Activated CD4-positive, alpha-beta memory T cell treated with anti-CD3 and anti-CD28 coated beads for 36 hours (primary cell): ENCODE measurements at regions of chr17 and their contacts with region 1.

Region 1: GRCh38 chr17:48779421-48779820 is 37.6 kb downstream of the TTLL6 start:
- DNase-seq: no peak
- H3K4me3 Mint-ChIP-seq: no peak overlapping the region
- H3K27ac Mint-ChIP-seq: no peak overlapping the region
- H3K4me1 Mint-ChIP-seq: no peaks in the 10 kb centered on the region
- H3K27me3 Mint-ChIP-seq: peaks cover 10% of the 10 kb centered on the region

Region 2: GRCh38 chr17:48760411-48760810 is 19.0 kb before region 1 on chr17:
- CTCF ChIA-PET with region 1: interaction called, 3 read pairs
- POLR2A ChIA-PET with region 1: no interaction called
- intact Hi-C with region 1: loop called (anchors 1 kb)
- DNase-seq: no peak
- H3K4me3 Mint-ChIP-seq: no peak overlapping the region
- H3K27ac Mint-ChIP-seq: no peak overlapping the region
- H3K4me1 Mint-ChIP-seq: no peaks in the 10 kb centered on the region
- H3K27me3 Mint-ChIP-seq: peaks cover 61% of the 10 kb centered on the region